Dendritic cell treated with granulocyte-macrophage colony-stimulating factor and Interleukin-4, amounts not matched to agents 40 ng/mL and 50 ng/mL, for 4 days (primary cell): ENCODE measurements at regions of chr5 and their contacts with region 1.

Region 1: DNA sequence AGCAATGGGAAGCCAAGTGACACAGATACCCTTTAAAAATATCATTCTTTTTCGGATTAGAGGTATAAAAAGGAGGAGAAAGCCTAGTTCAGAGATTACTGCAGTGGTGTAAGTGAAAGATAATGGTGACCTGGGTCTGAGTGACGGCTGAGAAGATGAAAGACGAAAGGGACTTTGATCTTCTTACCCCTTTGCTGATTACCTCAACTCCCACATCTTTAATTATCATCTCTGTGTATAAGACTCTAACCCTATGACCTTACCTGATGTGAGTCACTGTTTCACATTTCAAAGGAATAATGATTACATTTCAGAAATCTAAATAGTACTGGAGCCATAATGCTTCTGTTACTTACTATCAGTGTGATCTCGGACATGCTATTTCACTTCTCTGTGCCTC is 21.4 kb upstream of the CCNO start:
- H3K4me3 Mint-ChIP-seq: no peak overlapping the region
- H3K27ac Mint-ChIP-seq: no peak overlapping the region
- H3K4me1 Mint-ChIP-seq: no peaks in the 10 kb centered on the region
- H3K27me3 Mint-ChIP-seq: peaks cover 4% of the 10 kb centered on the region

Region 2: GRCh38 chr5:55218945-55219344 is 35.9 kb before region 1 on chr5:
- intact Hi-C with region 1: no loop called
- H3K4me3 Mint-ChIP-seq: no peak overlapping the region
- H3K27ac Mint-ChIP-seq: no peak overlapping the region
- H3K4me1 Mint-ChIP-seq: peaks cover 33% of the 10 kb centered on the region
- H3K27me3 Mint-ChIP-seq: peaks cover 78% of the 10 kb centered on the region

Region 3: DNA sequence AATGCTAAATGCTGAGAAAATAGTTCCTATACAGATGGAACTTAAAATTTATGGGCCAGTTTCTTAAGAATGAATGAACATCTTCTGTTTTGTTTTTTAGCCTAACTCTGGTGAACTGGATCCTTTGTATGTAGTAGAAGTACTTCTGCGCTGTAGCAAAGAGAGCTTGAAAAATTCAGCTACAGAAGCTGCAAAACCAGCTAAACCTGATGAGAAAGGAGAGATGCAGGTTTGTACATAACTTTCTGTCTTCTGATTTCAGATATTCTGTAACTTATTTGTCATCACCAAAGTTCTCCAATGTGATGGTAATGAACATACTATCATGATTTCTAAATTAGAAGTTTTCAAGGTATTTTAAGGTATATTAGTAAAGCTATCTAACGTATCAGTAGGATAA is 133.1 kb after region 1 on chr5:
- intact Hi-C with region 1: loop called (anchors 10 kb)
- H3K4me3 Mint-ChIP-seq: no peak overlapping the region
- H3K27ac Mint-ChIP-seq: no peak overlapping the region
- H3K4me1 Mint-ChIP-seq: no peaks in the 10 kb centered on the region
- H3K27me3 Mint-ChIP-seq: no peaks in the 10 kb centered on the region